ENCODE measurements at regions of chr1 and their contacts with region 1.

Region 1: GRCh38 chr1:86741947-86742572 is 37.7 kb downstream of the SH3GLB1 start:
- DNase-seq: peak; percentile 51
- H3K4me3 Mint-ChIP-seq: no peak overlapping the region
- H3K27ac Mint-ChIP-seq: no peak overlapping the region
- H3K4me1 Mint-ChIP-seq: peaks cover 2% of the 10 kb centered on the region
- H3K27me3 Mint-ChIP-seq: no peaks in the 10 kb centered on the region

Region 2: GRCh38 chr1:86389307-86389706 is 352.8 kb before region 1 on chr1:
- CTCF ChIA-PET with region 1: no interaction called
- DNase-seq: no peak
- H3K4me3 Mint-ChIP-seq: peak overlapping the region; percentile 72
- H3K27ac Mint-ChIP-seq: peak overlapping the region; percentile 94
- H3K4me1 Mint-ChIP-seq: peaks cover 54% of the 10 kb centered on the region
- H3K27me3 Mint-ChIP-seq: no peaks in the 10 kb centered on the region

Region 3: DNA sequence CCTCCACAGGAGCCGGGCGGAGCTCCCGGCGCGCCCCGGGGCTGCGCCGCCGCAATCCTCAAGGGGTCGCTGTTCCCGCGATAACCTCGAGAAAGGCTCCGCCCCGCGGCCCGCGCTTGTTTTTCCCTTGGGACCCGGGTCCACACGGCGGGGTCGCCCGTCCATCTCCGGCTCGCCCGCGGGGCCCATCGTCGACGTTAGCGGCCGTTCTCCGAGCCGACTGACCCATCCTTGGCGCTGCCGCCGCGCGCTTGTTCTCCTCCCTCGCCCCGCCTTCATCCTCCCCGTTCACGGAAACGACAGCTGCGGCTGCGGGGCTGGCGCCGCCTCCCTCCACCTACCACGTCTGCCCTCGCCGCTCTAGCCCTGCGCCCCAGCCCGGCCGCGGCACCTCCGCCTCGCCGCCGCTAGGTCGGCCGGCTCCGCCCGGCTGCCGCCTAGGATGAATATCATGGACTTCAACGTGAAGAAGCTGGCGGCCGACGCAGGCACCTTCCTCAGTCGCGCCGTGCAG is 37.5 kb before region 1 on chr1 and contains the start of gene SH3GLB1:
- CTCF ChIA-PET with region 1: interaction called, 10 read pairs
- DNase-seq: peak; percentile 92
- H3K4me3 Mint-ChIP-seq: peak within 1 kb of the TSS; percentile 96
- H3K27ac Mint-ChIP-seq: peak within 1 kb of the TSS; percentile 99
- H3K4me1 Mint-ChIP-seq: peaks cover 48% of the 10 kb centered on the region
- H3K27me3 Mint-ChIP-seq: no peaks in the 10 kb centered on the region

Region 4: DNA sequence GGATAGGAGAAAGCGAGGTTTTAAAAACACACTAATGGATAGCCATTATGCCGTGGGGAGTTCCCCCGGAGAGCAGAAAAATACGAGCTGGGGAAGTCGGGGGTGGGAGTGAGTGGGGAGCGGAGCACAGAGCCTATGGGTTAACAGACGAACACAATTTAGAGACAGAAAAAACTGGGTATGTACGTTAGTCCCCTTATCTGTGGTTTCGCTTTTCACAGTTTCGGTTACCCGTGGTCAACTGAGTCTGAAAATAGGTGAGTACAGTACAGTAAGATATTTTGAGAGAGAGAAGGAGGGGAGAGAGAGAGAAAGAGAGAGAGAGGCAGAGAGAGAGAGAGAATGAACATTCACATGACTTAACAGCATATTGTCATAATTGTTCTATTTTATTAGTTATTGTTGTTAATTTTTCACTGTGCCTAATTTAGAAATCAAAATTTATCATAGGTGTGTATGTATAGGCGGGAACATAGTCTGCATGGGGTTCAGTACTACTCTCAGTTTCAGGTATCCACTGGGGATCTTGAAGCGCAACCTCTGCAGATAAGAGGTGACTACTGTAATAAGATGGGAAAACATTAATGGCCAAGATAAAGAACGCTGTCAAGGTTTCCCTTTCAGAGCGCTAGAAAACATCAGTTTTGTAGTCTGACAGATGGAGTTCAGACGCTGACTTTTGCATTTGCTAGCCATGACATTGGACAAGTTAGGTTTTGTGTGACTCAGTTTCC is 461.0 kb after region 1 on chr1:
- CTCF ChIA-PET with region 1: no interaction called
- DNase-seq: no peak
- H3K4me3 Mint-ChIP-seq: no peak overlapping the region
- H3K27ac Mint-ChIP-seq: no peak overlapping the region
- H3K4me1 Mint-ChIP-seq: peaks cover 2% of the 10 kb centered on the region
- H3K27me3 Mint-ChIP-seq: peaks cover 25% of the 10 kb centered on the region